Naive thymus-derived CD4-positive, alpha-beta T cell (primary cell): ENCODE measurements at regions of chr4 and their contacts with region 1.

Region 1: DNA sequence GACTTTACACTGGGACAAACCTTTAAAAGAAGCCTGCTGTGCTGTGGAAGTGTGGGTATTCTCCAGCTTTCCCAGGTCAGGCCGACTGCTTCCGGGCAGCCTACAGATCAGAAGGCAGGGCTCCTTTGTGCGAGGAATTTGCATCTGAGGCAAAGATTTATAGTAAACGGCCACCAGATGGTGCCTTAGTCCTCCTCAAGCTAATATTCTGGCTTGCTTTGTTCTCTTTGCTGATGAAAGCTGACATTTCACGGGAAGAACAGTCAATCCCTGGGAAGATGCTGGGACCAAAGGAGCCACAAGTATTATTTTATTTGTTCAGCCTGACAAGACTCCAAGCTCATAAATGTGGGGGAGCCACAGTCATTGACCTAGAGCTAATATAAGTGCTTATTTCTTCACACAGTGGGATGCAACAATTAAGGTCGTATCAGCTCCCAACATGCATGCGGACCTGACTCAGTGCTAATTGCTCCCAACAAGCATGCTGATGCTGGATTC is 120.7 kb upstream of the TRIM2 start:
- DNase-seq: peak in 7 of 9 donors; percentile 44 to 66 (median 57)
- ATAC-seq: peak; percentile 61
- H3K4me3 ChIP-seq: no peak overlapping the region
- H3K4me3 Mint-ChIP-seq: peak overlapping the region in 3 of 10 donors; percentile 16 to 71 (median 36)
- H3K27ac ChIP-seq: no peak overlapping the region
- H3K27ac Mint-ChIP-seq: peak overlapping the region in 6 of 9 donors; percentile 45 to 83 (median 60)
- H3K4me1 ChIP-seq: peaks cover 5 to 33% of the 10 kb centered on the region in 2 donors
- H3K4me1 Mint-ChIP-seq: peaks cover 19 to 59% (median 49%) of the 10 kb centered on the region in 7 donors
- H3K27me3 ChIP-seq: no peaks in the 10 kb centered on the region
- H3K27me3 Mint-ChIP-seq: peaks cover 0 to 32% (median 0%) of the 10 kb centered on the region in 5 donors

Region 2: GRCh38 chr4:151117371-151117962 is 1966.0 kb before region 1 on chr4:
- CTCF ChIA-PET with region 1: no interaction called
- POLR2A ChIA-PET with region 1: interaction called, 4 read pairs
- intact Hi-C with region 1: loop called in 1 of 2 experiments (anchors 1 kb)
- DNase-seq: peak in 8 of 9 donors; percentile 22 to 63 (median 54)
- ATAC-seq: peak; percentile 86
- H3K4me3 ChIP-seq: no peak overlapping the region
- H3K4me3 Mint-ChIP-seq: no peak overlapping the region
- H3K27ac ChIP-seq: no peak overlapping the region
- H3K27ac Mint-ChIP-seq: peak overlapping the region in 1 of 9 donors; percentile 59
- H3K4me1 ChIP-seq: no peaks in the 10 kb centered on the region
- H3K4me1 Mint-ChIP-seq: peaks cover 0 to 8% (median 6%) of the 10 kb centered on the region in 7 donors
- H3K27me3 ChIP-seq: no peaks in the 10 kb centered on the region
- H3K27me3 Mint-ChIP-seq: no peaks in the 10 kb centered on the region

Region 3: GRCh38 chr4:152850377-152850776 is 233.1 kb before region 1 on chr4:
- CTCF ChIA-PET with region 1: interaction called, 29 read pairs
- POLR2A ChIA-PET with region 1: interaction called, 3 read pairs
- intact Hi-C with region 1: loop called (anchors 1 kb)
- DNase-seq: peak in 4 of 9 donors; percentile 2 to 20 (median 11)
- ATAC-seq: peak; percentile 78
- H3K4me3 ChIP-seq: no peak overlapping the region
- H3K4me3 Mint-ChIP-seq: peak overlapping the region in 5 of 10 donors; percentile 9 to 40 (median 34)
- H3K27ac ChIP-seq: no peak overlapping the region
- H3K27ac Mint-ChIP-seq: peak overlapping the region in 4 of 9 donors; percentile 9 to 55 (median 36)
- H3K4me1 ChIP-seq: peaks cover 0 to 11% of the 10 kb centered on the region in 2 donors
- H3K4me1 Mint-ChIP-seq: peaks cover 13 to 26% (median 21%) of the 10 kb centered on the region in 7 donors
- H3K27me3 ChIP-seq: no peaks in the 10 kb centered on the region
- H3K27me3 Mint-ChIP-seq: no peaks in the 10 kb centered on the region

Region 4: GRCh38 chr4:153036931-153037482 is 46.5 kb before region 1 on chr4:
- CTCF ChIA-PET with region 1: no interaction called
- POLR2A ChIA-PET with region 1: no interaction called
- intact Hi-C with region 1: no loop called
- DNase-seq: no peak
- ATAC-seq: no peak
- H3K4me3 ChIP-seq: no peak overlapping the region
- H3K4me3 Mint-ChIP-seq: no peak overlapping the region
- H3K27ac ChIP-seq: no peak overlapping the region
- H3K27ac Mint-ChIP-seq: no peak overlapping the region
- H3K4me1 ChIP-seq: no peaks in the 10 kb centered on the region
- H3K4me1 Mint-ChIP-seq: no peaks in the 10 kb centered on the region
- H3K27me3 ChIP-seq: no peaks in the 10 kb centered on the region
- H3K27me3 Mint-ChIP-seq: peaks cover 0 to 21% (median 13%) of the 10 kb centered on the region in 5 donors

Region 5: GRCh38 chr4:153067380-153067779 is 16.1 kb before region 1 on chr4:
- CTCF ChIA-PET with region 1: no interaction called
- POLR2A ChIA-PET with region 1: no interaction called
- intact Hi-C with region 1: no loop called
- DNase-seq: no peak
- ATAC-seq: no peak
- H3K4me3 ChIP-seq: no peak overlapping the region
- H3K4me3 Mint-ChIP-seq: no peak overlapping the region
- H3K27ac ChIP-seq: no peak overlapping the region
- H3K27ac Mint-ChIP-seq: peak overlapping the region in 1 of 9 donors; percentile 22
- H3K4me1 ChIP-seq: no peaks in the 10 kb centered on the region
- H3K4me1 Mint-ChIP-seq: peaks cover 0 to 2% (median 0%) of the 10 kb centered on the region in 7 donors
- H3K27me3 ChIP-seq: no peaks in the 10 kb centered on the region
- H3K27me3 Mint-ChIP-seq: peaks cover 0 to 5% (median 0%) of the 10 kb centered on the region in 5 donors

Region 6: DNA sequence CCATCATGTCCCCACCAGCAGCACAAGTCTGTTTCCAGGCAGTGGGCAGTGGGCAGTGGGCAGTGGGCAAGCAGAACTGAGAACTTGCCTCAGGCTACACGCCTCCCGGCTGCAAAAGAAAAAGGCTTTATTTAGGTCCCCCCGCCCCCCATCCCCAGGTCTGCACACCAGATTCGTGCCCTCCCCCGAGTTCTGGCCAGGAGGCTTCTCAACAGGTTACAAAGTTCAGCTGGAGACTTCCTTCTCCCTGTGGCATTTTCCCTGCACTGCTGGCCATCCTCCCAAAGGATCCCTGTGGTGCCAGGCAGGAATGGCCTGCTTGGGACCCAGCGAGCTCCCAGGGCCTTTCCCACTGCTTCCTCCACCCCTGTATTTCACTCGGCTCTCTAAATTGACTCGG is 23.7 kb after region 1 on chr4:
- CTCF ChIA-PET with region 1: interaction called, 95 read pairs
- POLR2A ChIA-PET with region 1: interaction called, 3 read pairs
- intact Hi-C with region 1: no loop called
- DNase-seq: no peak
- ATAC-seq: no peak
- H3K4me3 ChIP-seq: no peak overlapping the region
- H3K4me3 Mint-ChIP-seq: no peak overlapping the region
- H3K27ac ChIP-seq: no peak overlapping the region
- H3K27ac Mint-ChIP-seq: peak overlapping the region in 1 of 9 donors; percentile 23
- H3K4me1 ChIP-seq: peaks cover 0 to 5% of the 10 kb centered on the region in 2 donors
- H3K4me1 Mint-ChIP-seq: peaks cover 4 to 16% (median 7%) of the 10 kb centered on the region in 7 donors
- H3K27me3 ChIP-seq: no peaks in the 10 kb centered on the region
- H3K27me3 Mint-ChIP-seq: peaks cover 0 to 60% (median 0%) of the 10 kb centered on the region in 5 donors

Region 7: GRCh38 chr4:153122855-153123254 is 39.4 kb after region 1 on chr4:
- CTCF ChIA-PET with region 1: interaction called, 193 read pairs
- POLR2A ChIA-PET with region 1: interaction called, 15 read pairs
- intact Hi-C with region 1: loop called (anchors 1 kb)
- DNase-seq: no peak
- ATAC-seq: no peak
- H3K4me3 ChIP-seq: no peak overlapping the region
- H3K4me3 Mint-ChIP-seq: no peak overlapping the region
- H3K27ac ChIP-seq: no peak overlapping the region
- H3K27ac Mint-ChIP-seq: peak overlapping the region in 4 of 9 donors; percentile 5 to 38 (median 10)
- H3K4me1 ChIP-seq: peaks cover 0 to under 1% of the 10 kb centered on the region in 2 donors
- H3K4me1 Mint-ChIP-seq: peaks cover 0 to 13% (median 4%) of the 10 kb centered on the region in 7 donors
- H3K27me3 ChIP-seq: no peaks in the 10 kb centered on the region
- H3K27me3 Mint-ChIP-seq: peaks cover 0 to 13% (median 0%) of the 10 kb centered on the region in 5 donors

Region 8: GRCh38 chr4:153153339-153153871 is 69.9 kb after region 1 on chr4:
- CTCF ChIA-PET with region 1: interaction called, 6 read pairs
- POLR2A ChIA-PET with region 1: no interaction called
- intact Hi-C with region 1: loop called in 1 of 2 experiments (anchors 1 kb)
- DNase-seq: peak; percentile 53 to 84 (median 78)
- ATAC-seq: peak; percentile 95
- H3K4me3 ChIP-seq: peak overlapping the region; percentile 81
- H3K4me3 Mint-ChIP-seq: peak overlapping the region; percentile 91 to 96 (median 92)
- H3K27ac ChIP-seq: peak overlapping the region; percentile 69
- H3K27ac Mint-ChIP-seq: peak overlapping the region; percentile 78 to 90 (median 85)
- H3K4me1 ChIP-seq: peaks cover 3 to 12% of the 10 kb centered on the region in 2 donors
- H3K4me1 Mint-ChIP-seq: peaks cover 23 to 42% (median 38%) of the 10 kb centered on the region in 7 donors
- H3K27me3 ChIP-seq: no peaks in the 10 kb centered on the region
- H3K27me3 Mint-ChIP-seq: peaks cover 0 to 43% (median 0%) of the 10 kb centered on the region in 5 donors

Region 9: GRCh38 chr4:153189016-153189801 is 105.7 kb after region 1 on chr4:
- CTCF ChIA-PET with region 1: no interaction called
- POLR2A ChIA-PET with region 1: no interaction called
- intact Hi-C with region 1: no loop called
- DNase-seq: no peak
- ATAC-seq: no peak
- H3K4me3 ChIP-seq: no peak overlapping the region
- H3K4me3 Mint-ChIP-seq: no peak overlapping the region
- H3K27ac ChIP-seq: no peak overlapping the region
- H3K27ac Mint-ChIP-seq: no peak overlapping the region
- H3K4me1 ChIP-seq: no peaks in the 10 kb centered on the region
- H3K4me1 Mint-ChIP-seq: no peaks in the 10 kb centered on the region
- H3K27me3 ChIP-seq: no peaks in the 10 kb centered on the region
- H3K27me3 Mint-ChIP-seq: peaks cover 0 to 11% (median 0%) of the 10 kb centered on the region in 5 donors

Region 10: GRCh38 chr4:153643406-153644383 is 560.2 kb after region 1 on chr4:
- CTCF ChIA-PET with region 1: no interaction called
- POLR2A ChIA-PET with region 1: no interaction called
- intact Hi-C with region 1: loop called in 1 of 2 experiments (anchors 1 kb)
- DNase-seq: peak in 7 of 9 donors; percentile 25 to 73 (median 56)
- ATAC-seq: peak; percentile 91
- H3K4me3 ChIP-seq: no peak overlapping the region
- H3K4me3 Mint-ChIP-seq: peak overlapping the region in 6 of 10 donors; percentile 0 to 46 (median 22)
- H3K27ac ChIP-seq: no peak overlapping the region
- H3K27ac Mint-ChIP-seq: peak overlapping the region in 7 of 9 donors; percentile 0 to 69 (median 8)
- H3K4me1 ChIP-seq: no peaks in the 10 kb centered on the region
- H3K4me1 Mint-ChIP-seq: peaks cover 4 to 22% (median 18%) of the 10 kb centered on the region in 7 donors
- H3K27me3 ChIP-seq: no peaks in the 10 kb centered on the region
- H3K27me3 Mint-ChIP-seq: no peaks in the 10 kb centered on the region